Activated CD8-positive, alpha-beta memory T cell treated with anti-CD3 and anti-CD28 coated beads, Interleukin-2, amount 10 ng/mL, durations not matched to agents 7 days and 5 days (primary cell): ENCODE measurements at regions of chr21 and their contacts with region 1.

Region 1: GRCh38 chr21:42467140-42467983 is 28.7 kb downstream of the RSPH1 start:
- DNase-seq: peak; percentile 66
- ATAC-seq: peak; percentile 28
- H3K4me3 Mint-ChIP-seq: no peak overlapping the region
- H3K27ac Mint-ChIP-seq: no peak overlapping the region
- H3K4me1 Mint-ChIP-seq: peaks cover 43% of the 10 kb centered on the region
- H3K27me3 Mint-ChIP-seq: peaks cover 4% of the 10 kb centered on the region

Region 2: DNA sequence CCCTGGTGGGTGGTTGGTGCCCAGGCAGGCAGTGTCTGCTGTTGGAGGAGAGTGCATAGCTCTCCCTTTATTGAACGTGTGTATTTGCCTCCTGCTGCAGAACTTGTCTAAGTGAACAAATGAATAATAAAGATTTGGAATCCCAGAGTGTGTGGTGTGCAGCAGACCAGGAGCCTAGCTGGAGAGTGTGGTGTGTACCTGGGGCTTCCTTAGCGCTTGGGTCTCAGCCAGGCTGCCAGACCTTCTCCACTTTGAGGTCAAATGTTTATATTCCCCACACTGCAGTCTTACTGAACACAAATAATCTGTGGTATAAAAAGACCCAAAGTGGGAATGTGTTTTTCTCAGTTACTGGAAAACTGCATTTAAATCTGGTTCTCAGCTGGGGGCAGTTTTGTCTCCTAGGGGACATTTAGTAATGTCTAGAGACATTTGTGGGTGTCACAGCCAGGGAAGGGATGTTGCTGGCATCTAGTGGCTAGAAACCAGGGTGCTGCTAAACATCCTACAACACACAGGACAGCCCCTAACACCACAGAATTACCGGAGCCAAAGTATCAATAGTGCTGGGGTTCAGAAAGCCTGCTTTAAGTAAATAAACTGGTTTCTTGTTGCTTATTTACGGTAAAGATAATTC is 69.9 kb after region 1 on chr21:
- CTCF ChIA-PET with region 1: interaction called, 31 read pairs
- DNase-seq: peak; percentile 64
- ATAC-seq: peak; percentile 68
- H3K4me3 Mint-ChIP-seq: no peak overlapping the region
- H3K27ac Mint-ChIP-seq: no peak overlapping the region
- H3K4me1 Mint-ChIP-seq: no peaks in the 10 kb centered on the region
- H3K27me3 Mint-ChIP-seq: no peaks in the 10 kb centered on the region